Activated naive CD4-positive, alpha-beta T cell treated with anti-CD3 and anti-CD28 coated beads for 36 hours (primary cell): ENCODE measurements at regions of chr1 and their contacts with region 1.

Region 1: DNA sequence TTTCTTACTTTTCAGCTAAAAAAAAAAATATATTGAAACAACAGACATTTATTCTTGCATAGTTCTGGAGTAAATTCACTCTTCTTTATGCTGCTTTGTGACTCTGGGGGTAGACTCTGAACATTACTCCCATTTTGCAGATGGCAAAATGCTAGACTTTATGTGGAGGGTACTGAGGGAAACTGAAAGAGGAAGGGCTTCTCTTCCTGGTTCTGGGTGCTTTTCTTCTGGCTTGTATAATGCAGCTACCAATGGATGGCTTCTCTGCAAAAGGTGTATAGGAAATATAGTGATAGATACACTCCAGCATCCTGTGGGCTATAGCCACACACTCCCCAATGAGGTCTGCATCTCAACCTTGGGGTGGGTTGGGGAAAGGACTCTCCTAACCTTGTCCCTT is 19.7 kb upstream of the ZBTB40 start:
- DNase-seq: no peak
- H3K4me3 Mint-ChIP-seq: no peak overlapping the region
- H3K27ac Mint-ChIP-seq: no peak overlapping the region
- H3K4me1 Mint-ChIP-seq: no peaks in the 10 kb centered on the region
- H3K27me3 Mint-ChIP-seq: peaks cover 9% of the 10 kb centered on the region

Region 2: DNA sequence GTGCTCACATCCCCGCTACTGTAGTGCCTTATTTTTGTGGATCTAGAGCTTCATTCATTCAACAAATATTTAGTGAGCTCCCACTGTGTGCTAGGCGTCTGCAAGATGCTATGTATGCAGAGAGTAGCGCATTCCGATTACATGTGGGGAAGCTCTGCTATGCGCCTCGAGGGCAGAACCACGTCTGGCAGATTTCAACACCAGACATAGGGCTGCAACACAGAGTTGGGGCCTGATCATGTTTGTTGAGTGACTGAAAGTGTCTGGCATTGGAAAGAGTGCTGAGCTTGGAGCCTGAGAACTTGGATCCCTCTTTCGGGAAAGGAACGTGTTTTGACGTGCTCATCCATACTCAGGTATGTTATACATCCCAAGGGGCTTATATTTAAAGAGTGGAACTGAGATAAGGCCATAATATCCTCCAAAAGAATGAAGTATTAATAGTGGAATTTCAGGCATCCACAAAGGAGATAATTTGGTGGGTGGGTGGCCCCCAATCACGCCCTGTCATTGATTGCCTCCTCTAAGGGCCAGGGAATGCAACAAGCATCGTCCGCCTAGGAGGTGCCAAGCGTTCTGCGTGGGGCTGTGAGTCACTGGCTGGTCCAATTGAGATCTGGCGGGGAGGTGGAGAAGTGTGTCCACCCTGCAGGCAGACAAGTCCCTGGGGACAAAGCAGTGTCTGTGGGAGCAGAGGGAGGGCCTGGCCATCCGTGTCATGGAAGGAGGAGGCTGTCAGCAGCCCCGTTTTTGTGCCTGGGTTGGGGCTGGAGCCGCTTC is 43.1 kb before region 1 on chr1:
- CTCF ChIA-PET with region 1: no interaction called
- intact Hi-C with region 1: no loop called
- DNase-seq: no peak
- H3K4me3 Mint-ChIP-seq: no peak overlapping the region
- H3K27ac Mint-ChIP-seq: no peak overlapping the region
- H3K4me1 Mint-ChIP-seq: no peaks in the 10 kb centered on the region
- H3K27me3 Mint-ChIP-seq: peaks cover 36% of the 10 kb centered on the region

Region 3: DNA sequence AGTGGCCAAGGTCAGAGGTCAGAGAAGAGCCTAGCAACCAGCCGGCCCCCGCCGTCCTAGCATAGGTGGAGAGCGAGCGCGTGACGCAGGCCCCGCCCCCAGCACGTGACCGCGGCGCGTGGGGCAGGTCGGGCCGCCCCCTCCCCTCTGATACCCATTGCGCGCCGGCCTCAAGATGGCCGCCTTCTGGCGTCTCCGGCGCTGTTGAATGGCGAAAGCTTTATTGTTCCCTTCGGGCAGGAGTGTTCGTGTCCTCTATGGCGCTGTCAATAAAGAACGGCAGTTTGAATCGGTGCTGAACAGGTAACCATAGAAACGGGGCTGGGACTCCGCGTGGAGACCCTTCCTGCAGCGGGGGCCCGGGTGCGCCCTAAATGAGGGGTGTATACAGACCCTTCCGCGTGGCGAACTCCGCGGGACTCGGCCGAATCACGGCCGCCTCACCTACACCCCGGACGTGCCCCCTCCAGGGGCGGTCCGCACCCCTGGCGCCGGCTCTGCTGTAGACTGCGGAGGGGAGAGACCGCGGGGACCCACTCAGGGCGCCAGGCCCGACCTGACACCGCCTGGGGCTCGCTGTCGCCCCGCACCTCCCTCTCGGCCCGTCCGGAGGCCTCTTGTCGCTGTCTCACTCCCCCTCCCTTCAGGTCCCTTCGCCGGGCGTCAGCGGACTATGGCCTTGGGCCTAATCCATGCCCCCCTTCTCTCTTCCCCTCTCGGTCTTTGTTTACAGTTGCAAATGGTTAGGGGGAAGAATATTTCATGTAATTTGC is 19.9 kb after region 1 on chr1 and contains the start of gene ZBTB40:
- CTCF ChIA-PET with region 1: no interaction called
- intact Hi-C with region 1: loop called (anchors 1 kb)
- DNase-seq: peak; percentile 96
- H3K4me3 Mint-ChIP-seq: peak within 1 kb of the TSS; percentile 85
- H3K27ac Mint-ChIP-seq: peak within 1 kb of the TSS; percentile 80
- H3K4me1 Mint-ChIP-seq: peaks cover 35% of the 10 kb centered on the region
- H3K27me3 Mint-ChIP-seq: no peaks in the 10 kb centered on the region
- total RNA-seq, gene ZBTB40: 11.5 to 13.1 TPM

Region 4: GRCh38 chr1:22471078-22471477 is 39.1 kb after region 1 on chr1:
- CTCF ChIA-PET with region 1: no interaction called
- intact Hi-C with region 1: no loop called
- DNase-seq: no peak
- H3K4me3 Mint-ChIP-seq: no peak overlapping the region
- H3K27ac Mint-ChIP-seq: no peak overlapping the region
- H3K4me1 Mint-ChIP-seq: peaks cover 11% of the 10 kb centered on the region
- H3K27me3 Mint-ChIP-seq: no peaks in the 10 kb centered on the region

Region 5: DNA sequence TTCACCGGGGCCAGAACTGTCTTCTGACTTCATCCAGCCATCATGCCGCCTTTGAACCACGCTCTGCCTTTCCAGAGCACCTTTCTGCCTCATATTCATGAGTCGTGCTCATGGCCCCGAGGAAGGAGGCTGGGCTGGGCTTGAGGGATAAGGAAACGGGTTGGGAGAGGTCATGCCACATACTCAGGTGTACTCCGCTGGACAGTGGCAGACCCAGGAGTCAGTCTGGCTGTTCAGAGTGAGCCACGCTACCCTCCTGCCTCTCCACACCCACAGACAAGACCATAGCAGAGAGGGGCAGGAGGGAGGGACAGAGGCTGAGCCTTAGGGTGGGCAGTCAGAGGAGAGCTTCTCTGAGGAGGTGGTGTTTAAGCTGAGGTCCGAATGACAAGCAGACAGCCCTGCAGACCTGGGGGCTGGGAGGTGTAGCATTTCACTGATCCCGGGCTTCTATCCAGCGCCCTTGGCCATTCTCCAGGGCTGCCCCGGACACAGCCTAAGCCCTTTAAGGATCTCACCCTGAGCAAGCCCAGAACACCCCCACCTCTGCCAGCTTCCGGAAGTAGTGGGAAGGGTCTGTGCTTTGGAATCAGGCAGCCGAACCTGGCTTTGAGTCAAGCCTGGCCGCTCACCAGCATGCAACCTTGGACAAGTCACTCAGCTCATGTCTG is 438.4 kb after region 1 on chr1:
- CTCF ChIA-PET with region 1: no interaction called
- intact Hi-C with region 1: no loop called
- DNase-seq: no peak
- H3K4me3 Mint-ChIP-seq: no peak overlapping the region
- H3K27ac Mint-ChIP-seq: no peak overlapping the region
- H3K4me1 Mint-ChIP-seq: no peaks in the 10 kb centered on the region
- H3K27me3 Mint-ChIP-seq: peaks cover 2% of the 10 kb centered on the region